ENCODE measurements at regions of chr14 and their contacts with region 1.

Region 1: DNA sequence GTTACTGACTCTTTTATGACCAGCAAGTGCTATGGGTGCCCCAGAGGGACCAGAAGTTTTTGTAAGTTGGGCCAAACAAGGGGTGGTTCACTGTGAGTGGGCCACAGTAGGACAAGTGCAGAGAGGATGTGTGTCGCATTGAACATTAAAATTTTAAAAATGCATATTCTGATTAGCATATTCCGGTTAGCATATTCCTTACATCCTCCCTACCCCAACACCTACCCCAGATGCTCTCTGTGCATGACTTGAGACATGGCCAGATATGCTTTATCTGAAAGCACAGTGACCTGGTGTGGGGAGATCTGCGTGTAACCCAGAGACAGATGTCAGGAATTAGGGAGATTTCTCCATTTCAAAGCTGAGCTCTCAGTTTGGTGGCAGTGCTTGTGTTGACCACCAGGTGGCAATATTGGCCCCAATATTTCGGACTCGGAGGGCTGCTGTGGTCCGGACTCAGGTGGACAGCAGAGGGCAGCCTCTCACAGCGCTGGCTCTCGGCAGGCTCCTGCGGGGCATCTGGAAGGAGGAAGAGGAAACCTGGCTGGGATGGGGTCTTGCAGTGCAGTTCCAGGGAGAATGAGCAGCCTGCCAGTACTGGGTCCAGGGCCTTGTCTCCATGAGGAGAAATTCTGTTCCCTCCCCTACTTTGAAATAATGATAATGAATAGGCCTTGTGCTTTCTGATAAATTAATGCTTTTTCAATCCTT is 1.6 kb upstream of the CEBPE start:
- DNase-seq: peak; percentile 83
- H3K4me3 Mint-ChIP-seq: no peak overlapping the region
- H3K27ac Mint-ChIP-seq: no peak overlapping the region
- H3K4me1 Mint-ChIP-seq: peaks cover 21% of the 10 kb centered on the region
- H3K27me3 Mint-ChIP-seq: no peaks in the 10 kb centered on the region
- CTCF ChIP-seq: peak; percentile 100

Region 2: GRCh38 chr14:22939684-22940083 is 181.0 kb before region 1 on chr14:
- CTCF ChIA-PET with region 1: no interaction called
- POLR2A ChIA-PET with region 1: no interaction called
- intact Hi-C with region 1: no loop called
- DNase-seq: no peak
- H3K4me3 Mint-ChIP-seq: no peak overlapping the region
- H3K27ac Mint-ChIP-seq: no peak overlapping the region
- H3K4me1 Mint-ChIP-seq: no peaks in the 10 kb centered on the region
- H3K27me3 Mint-ChIP-seq: no peaks in the 10 kb centered on the region
- CTCF ChIP-seq: no peak

Region 3: GRCh38 chr14:23109769-23110168 is 10.9 kb before region 1 on chr14:
- CTCF ChIA-PET with region 1: interaction called, 13 read pairs
- POLR2A ChIA-PET with region 1: interaction called, 3 read pairs
- intact Hi-C with region 1: no loop called
- DNase-seq: no peak
- H3K4me3 Mint-ChIP-seq: no peak overlapping the region
- H3K27ac Mint-ChIP-seq: no peak overlapping the region
- H3K4me1 Mint-ChIP-seq: peaks cover 5% of the 10 kb centered on the region
- H3K27me3 Mint-ChIP-seq: no peaks in the 10 kb centered on the region
- CTCF ChIP-seq: no peak

Region 4: GRCh38 chr14:23147676-23148075 is 27.0 kb after region 1 on chr14:
- CTCF ChIA-PET with region 1: interaction called, 39 read pairs
- POLR2A ChIA-PET with region 1: interaction called, 9 read pairs
- intact Hi-C with region 1: no loop called
- DNase-seq: peak; percentile 83
- H3K4me3 Mint-ChIP-seq: no peak overlapping the region
- H3K27ac Mint-ChIP-seq: no peak overlapping the region
- H3K4me1 Mint-ChIP-seq: peaks cover 39% of the 10 kb centered on the region
- H3K27me3 Mint-ChIP-seq: no peaks in the 10 kb centered on the region
- CTCF ChIP-seq: no peak

Region 5: DNA sequence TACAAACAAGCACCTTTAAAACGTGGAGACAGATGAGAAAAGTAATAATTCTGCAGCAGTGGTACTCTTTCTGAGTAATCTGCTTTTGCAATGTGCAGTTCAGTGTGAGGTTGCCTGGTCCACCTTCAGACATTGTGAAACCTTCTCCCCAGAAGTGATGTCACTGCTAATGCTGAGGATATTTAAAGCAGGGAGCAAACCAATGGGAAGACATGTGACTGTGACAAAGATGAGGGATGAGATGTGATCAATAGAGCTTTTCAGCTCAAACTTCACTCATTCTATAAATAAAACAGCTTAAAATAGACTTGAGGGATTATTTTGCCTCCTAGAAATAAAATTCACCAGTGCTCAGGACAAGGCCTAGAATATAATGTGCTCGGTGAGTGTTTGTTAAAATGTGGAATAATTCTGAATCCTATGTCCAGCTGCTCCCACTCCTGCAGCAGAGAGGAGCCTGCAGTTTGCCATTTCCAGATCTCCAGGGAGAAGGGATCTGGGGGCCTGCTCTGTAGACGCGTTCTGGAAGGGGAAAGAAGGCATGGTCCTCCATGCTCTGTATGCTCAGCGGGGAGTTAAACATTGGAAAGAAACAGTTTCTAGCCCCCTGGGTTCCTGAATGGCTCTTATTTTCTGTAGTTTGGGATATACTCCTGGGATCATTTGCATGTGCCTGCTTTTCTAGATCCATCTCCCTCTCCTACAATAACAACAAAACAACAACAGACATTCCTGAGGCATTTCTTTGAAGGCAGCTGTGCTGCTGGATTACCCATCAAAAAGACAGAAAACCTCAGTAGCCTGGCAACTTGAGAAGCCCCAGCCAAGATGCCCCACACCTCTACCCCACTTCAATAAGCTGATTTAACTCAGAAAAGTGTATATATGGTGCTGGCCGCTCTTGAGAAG is 53.8 kb after region 1 on chr14:
- CTCF ChIA-PET with region 1: interaction called, 110 read pairs
- POLR2A ChIA-PET with region 1: interaction called, 6 read pairs
- intact Hi-C with region 1: no loop called
- DNase-seq: peak; percentile 65
- H3K4me3 Mint-ChIP-seq: no peak overlapping the region
- H3K27ac Mint-ChIP-seq: no peak overlapping the region
- H3K4me1 Mint-ChIP-seq: peaks cover 39% of the 10 kb centered on the region
- H3K27me3 Mint-ChIP-seq: no peaks in the 10 kb centered on the region
- CTCF ChIP-seq: no peak

Region 6: DNA sequence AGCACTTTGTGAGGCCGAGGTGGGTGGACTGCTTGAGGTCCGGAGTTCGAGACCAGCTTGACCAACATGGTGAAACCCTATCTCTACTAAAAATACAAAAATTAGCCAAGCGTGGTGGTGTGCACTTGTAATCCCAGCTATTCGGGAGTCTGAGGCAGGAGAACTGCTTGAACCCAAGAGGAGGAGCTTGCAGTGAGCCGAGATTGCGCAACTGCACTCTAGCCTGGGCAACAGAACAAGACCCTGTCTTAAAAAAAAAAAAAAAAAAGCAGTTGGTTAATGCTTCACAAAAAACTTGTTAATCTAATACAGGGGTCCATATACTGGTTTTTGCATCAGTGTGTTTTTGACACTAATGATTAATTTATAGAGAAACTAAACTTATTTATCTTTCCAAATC is 81.3 kb after region 1 on chr14:
- CTCF ChIA-PET with region 1: interaction called, 25 read pairs
- POLR2A ChIA-PET with region 1: no interaction called
- intact Hi-C with region 1: no loop called
- DNase-seq: no peak
- H3K4me3 Mint-ChIP-seq: no peak overlapping the region
- H3K27ac Mint-ChIP-seq: no peak overlapping the region
- H3K4me1 Mint-ChIP-seq: peaks cover 10% of the 10 kb centered on the region
- H3K27me3 Mint-ChIP-seq: no peaks in the 10 kb centered on the region
- CTCF ChIP-seq: no peak